Panc1 (cell line): ENCODE measurements at regions of chr9 and their contacts with region 1.

Region 1: DNA sequence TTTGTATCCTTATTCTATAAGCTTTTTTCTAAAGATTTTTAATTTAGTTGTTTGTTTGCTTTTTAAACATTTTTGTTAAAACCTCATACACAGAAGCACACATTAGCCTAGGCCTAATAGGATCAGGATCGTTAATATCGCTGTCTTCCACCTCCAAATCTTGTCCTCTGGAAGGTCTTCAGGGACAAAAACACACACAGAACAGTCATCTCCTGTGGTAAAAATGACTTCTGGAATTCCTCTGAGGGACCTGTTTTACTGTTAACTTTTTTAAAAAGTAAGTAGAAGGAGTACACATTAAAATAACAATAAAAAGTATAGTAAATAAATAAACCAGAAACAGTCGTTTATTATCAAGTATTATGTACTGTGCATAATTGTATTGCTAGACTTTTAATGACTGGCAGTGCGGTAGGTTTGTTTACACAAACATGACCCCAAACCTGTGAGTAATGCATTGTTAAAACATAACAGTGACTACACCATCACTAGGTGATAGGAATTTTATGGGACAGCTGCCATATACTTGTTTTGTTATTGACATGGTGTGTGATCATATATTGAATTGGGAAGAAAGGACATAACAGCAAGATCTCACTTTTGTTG is 109.6 kb downstream of the ZCCHC7 start:
- DNase-seq: peak; percentile 93
- ATAC-seq: peak; percentile 98
- H3K4me3 ChIP-seq: no peak overlapping the region
- H3K27ac ChIP-seq: 0 out of 2 replicates have a peak overlapping the region, but pooled peaks have one; percentile 8
- H3K4me1 ChIP-seq: peaks cover 29% of the 10 kb centered on the region
- H3K27me3 ChIP-seq: no peaks in the 10 kb centered on the region
- CTCF ChIP-seq: no peak

Region 2: DNA sequence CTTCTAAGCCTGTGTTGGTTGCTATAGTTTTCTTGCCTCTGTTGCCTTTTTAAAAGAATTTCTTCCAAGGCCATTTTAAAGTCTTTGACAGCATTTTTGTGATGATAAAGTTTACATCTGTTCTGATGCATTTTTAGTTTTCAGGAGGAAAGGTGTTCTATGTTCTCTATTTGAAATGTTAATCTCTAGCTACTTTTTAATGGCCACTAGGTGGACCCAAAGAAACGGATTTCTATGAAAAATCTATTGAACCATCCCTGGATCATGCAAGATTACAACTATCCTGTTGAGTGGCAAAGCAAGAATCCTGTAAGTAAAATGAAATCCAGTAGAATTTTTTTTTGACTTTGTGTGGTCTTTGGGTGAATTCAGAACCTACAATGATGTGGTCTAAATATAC is 597.1 kb before region 1 on chr9:
- CTCF ChIA-PET with region 1: no interaction called
- POLR2A ChIA-PET with region 1: no interaction called
- in situ Hi-C with region 1: no loop called
- intact Hi-C with region 1: no loop called
- DNase-seq: no peak
- ATAC-seq: peak; percentile 68; the same call in 1 of the 2 replicates
- H3K4me3 ChIP-seq: no peak overlapping the region
- H3K27ac ChIP-seq: no peak overlapping the region
- H3K4me1 ChIP-seq: no peaks in the 10 kb centered on the region
- H3K27me3 ChIP-seq: no peaks in the 10 kb centered on the region
- CTCF ChIP-seq: no peak

Region 3: DNA sequence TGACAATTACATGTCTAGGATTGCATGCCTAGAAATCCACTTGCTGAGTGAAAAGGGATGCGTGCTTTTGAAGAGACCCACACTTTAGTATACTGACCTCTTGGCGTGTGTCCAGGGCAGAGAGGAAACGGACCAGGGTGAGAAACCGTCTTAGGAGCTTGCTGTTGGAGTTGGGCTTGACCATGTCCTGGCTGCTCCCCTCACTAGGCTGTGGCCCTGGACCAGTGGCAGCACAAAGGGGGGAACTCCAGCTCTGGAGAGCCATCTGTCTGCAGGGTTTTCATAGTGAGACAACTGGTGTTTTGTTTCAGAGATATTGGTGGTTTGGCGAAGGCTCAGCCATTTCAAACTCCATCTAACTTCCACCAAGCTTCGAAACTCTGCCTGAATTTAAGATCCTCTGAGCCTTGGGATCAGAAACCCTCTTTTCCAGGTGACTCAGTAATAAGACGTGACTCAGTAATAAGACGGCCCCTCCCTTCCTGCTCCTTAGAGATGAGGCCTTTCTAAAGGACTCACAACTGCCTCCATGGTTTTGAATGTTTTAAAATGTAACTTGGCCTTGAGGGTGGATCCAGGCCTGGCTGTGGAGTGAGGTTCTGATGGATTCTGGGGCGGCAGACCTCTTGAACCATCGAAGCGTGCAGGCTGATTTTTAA is 491.5 kb before region 1 on chr9:
- CTCF ChIA-PET with region 1: no interaction called
- POLR2A ChIA-PET with region 1: no interaction called
- in situ Hi-C with region 1: no loop called
- intact Hi-C with region 1: no loop called
- DNase-seq: no peak
- ATAC-seq: peak; percentile 76
- H3K4me3 ChIP-seq: no peak overlapping the region
- H3K27ac ChIP-seq: no peak overlapping the region
- H3K4me1 ChIP-seq: no peaks in the 10 kb centered on the region
- H3K27me3 ChIP-seq: peaks cover 8% of the 10 kb centered on the region; the same call in 1 of the 2 replicates
- CTCF ChIP-seq: no peak

Region 4: GRCh38 chr9:37126214-37126788 is 103.7 kb before region 1 on chr9:
- CTCF ChIA-PET with region 1: no interaction called
- POLR2A ChIA-PET with region 1: no interaction called
- in situ Hi-C with region 1: loop called (anchors 5 kb)
- intact Hi-C with region 1: no loop called
- DNase-seq: no peak
- ATAC-seq: no peak
- H3K4me3 ChIP-seq: no peak overlapping the region
- H3K27ac ChIP-seq: no peak overlapping the region
- H3K4me1 ChIP-seq: peaks cover 18% of the 10 kb centered on the region
- H3K27me3 ChIP-seq: no peaks in the 10 kb centered on the region
- CTCF ChIP-seq: no peak

Region 5: DNA sequence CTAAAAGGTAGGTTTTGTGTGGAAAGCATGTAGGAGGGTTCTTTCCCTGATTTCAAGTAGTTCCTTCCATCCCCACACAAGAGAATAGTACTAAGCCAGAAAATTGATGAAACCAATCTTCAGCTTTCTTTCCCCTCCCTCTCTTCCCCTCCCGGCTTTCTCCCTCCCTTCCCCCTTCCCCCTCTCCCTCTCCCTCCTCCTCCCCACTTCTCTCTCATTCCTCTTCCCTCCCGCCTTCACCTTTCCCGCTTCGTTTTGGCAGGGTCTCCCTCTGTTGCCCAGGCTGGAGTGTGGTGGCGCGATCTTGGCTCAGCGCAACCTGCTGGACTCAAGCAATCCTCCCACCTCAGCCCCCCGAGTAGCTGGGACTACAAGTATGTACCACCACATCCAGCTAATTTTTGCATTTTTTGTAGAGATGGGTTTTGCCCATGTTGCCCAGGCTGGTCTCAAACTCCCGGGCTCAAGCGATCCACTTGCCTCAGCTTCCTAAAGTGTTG is 23.8 kb before region 1 on chr9:
- CTCF ChIA-PET with region 1: interaction called, 16 read pairs
- POLR2A ChIA-PET with region 1: interaction called, 8 read pairs
- in situ Hi-C with region 1: no loop called
- intact Hi-C with region 1: no loop called
- DNase-seq: no peak
- ATAC-seq: no peak
- H3K4me3 ChIP-seq: no peak overlapping the region
- H3K27ac ChIP-seq: no peak overlapping the region
- H3K4me1 ChIP-seq: no peaks in the 10 kb centered on the region; the same call in 1 of the 2 replicates
- H3K27me3 ChIP-seq: no peaks in the 10 kb centered on the region
- CTCF ChIP-seq: no peak

Region 6: DNA sequence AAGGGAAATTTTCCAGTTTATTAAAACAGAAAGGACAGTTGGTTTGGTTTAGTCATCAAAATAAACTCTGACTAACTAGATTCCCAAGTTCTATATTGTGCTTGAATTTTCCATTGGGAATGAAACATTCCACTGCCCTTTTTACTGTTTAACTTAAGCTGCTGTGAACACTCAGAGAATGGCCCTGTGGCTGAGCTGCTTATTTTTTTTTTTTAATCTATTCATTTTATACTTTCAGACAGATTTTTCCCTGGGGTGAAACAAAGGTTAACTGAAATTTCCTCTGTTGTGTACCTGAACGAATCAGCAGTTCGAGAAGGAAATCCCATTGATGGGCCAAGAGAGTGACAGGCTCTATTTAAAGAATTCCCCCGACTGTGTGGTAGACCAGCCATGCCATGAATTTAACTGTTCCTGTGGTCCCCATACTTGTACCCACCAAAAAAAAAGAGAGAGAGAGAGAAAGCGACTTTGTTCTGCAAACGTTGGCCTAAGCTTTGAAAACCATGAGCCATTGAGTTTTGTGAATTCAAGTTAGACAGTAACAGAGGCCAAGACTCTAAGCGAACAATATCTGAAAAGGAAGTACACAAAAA is 53.8 kb after region 1 on chr9:
- CTCF ChIA-PET with region 1: no interaction called
- POLR2A ChIA-PET with region 1: no interaction called
- in situ Hi-C with region 1: no loop called
- intact Hi-C with region 1: loop called (anchors 5 kb)
- DNase-seq: peak; percentile 36
- ATAC-seq: peak; percentile 81
- H3K4me3 ChIP-seq: no peak overlapping the region
- H3K27ac ChIP-seq: peak overlapping the region; percentile 12; the same call in 1 of the 2 replicates
- H3K4me1 ChIP-seq: peaks cover 18% of the 10 kb centered on the region
- H3K27me3 ChIP-seq: no peaks in the 10 kb centered on the region
- CTCF ChIP-seq: no peak